Activated CD4-positive, alpha-beta T cell treated with anti-CD3 and anti-CD28 coated beads for 36 hours (primary cell): ENCODE measurements at regions of chr19 and their contacts with region 1.

Region 1: DNA sequence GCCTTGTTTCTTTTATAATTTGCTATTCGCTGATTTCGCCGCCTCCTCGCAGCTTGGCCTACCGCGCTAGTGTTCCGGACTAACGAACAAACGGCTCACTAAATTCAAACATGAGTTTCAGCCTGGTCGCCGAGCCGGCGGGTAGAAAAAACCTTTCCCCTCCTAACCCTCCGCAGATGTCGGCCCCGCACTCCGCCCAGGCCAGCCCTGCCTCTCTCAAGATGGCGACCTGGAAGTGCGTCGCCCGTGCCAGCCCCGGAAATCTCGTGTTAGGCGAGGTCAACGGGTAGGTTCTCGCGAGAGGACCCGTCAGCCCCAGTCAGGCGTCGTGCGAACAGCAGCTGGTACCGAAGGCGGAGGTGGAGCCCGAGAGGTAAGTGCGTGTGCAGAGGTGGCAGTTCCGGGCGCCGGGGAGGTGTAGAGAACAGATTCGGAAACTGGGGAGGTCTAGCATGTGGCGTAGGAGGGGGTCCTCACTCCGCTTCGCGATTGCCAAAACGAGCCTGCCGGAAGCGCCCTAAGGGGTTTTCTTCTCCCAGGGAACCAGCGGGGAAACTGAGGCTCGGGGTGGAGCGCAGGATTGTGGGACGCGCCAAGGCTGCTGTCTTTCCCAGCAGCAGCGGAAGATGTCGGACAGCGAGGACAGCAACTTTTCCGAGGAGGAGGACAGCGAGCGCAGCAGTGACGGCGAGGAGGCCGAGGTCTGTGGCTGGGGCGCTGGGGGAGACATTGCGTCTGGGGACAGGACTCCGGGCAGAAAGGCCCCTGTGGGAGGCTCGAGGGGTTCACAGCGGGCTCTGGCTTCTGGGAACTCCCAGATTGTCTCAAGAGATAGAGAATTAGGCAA is at the start of gene SUPT5H:
- DNase-seq: peak; percentile 99
- ATAC-seq: peak; percentile 89
- H3K4me3 Mint-ChIP-seq: peak within 1 kb of the TSS; percentile 100
- H3K27ac Mint-ChIP-seq: peak within 1 kb of the TSS; percentile 100
- H3K4me1 Mint-ChIP-seq: peaks cover 43% of the 10 kb centered on the region
- H3K27me3 Mint-ChIP-seq: no peaks in the 10 kb centered on the region
- total RNA-seq, gene SUPT5H: 157 to 165 TPM

Region 2: GRCh38 chr19:39390755-39391592 is 54.5 kb before region 1 on chr19 and contains the starts of genes MED29 and PAF1:
- CTCF ChIA-PET with region 1: interaction called, 3 read pairs
- POLR2A ChIA-PET with region 1: interaction called, 5 read pairs
- intact Hi-C with region 1: loop called in 1 of 2 experiments (anchors 1 kb)
- DNase-seq: peak; percentile 98
- ATAC-seq: peak; percentile 97
- H3K4me3 Mint-ChIP-seq: peak within 1 kb of the TSS; percentile 99
- H3K27ac Mint-ChIP-seq: peak within 1 kb of the TSS; percentile 98
- H3K4me1 Mint-ChIP-seq: peaks cover 28% of the 10 kb centered on the region
- H3K27me3 Mint-ChIP-seq: no peaks in the 10 kb centered on the region
- total RNA-seq, gene MED29: 24.0 to 34.6 TPM
- total RNA-seq, gene PAF1: 40.4 to 54.2 TPM

Region 3: DNA sequence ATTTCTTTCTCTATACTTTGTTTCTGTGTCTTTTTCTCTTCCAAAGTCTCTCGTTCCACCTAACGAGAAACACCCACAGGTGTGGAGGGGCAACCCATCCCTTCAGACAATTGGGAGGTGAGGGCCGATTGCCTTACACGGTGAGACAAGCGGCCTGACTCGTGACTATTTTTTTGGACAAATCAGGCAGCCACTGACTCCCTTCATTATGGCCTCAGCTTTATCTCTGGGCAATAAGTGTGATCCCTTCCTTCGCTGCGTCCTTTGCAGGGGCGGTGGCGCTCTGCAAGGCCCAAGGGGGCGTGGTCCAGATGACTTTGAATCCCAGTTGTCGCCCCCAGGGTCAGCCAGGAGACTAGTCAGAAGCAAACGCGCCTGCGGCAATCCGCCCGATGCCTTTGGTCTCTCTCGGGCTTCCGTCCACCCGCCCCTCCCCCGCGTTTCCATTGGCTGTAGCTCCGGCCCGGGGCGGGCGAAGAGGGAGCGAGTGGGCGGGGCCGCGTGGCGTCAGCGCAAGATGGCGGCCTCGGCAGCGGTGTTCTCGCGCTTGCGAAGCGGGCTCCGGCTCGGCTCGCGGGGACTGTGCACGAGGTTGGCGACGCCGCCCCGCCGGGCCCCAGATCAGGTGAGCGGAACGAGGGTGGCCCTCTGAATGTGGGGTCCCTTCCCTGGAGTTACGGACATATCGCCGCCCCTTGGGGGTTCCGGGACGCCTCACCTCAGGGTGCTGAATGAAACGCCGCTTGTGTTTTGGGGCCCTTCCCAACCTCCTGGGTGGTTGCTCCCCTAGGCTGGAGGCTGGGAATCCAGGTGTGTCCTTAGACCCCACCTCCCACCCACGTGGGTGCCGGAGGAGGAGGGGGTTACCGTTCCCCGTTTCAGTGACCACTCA is 35.1 kb after region 1 on chr19 and contains the start of gene TIMM50:
- CTCF ChIA-PET with region 1: no interaction called
- POLR2A ChIA-PET with region 1: interaction called, 3 read pairs
- intact Hi-C with region 1: loop called (anchors 1 to 2 kb)
- DNase-seq: peak; percentile 100
- ATAC-seq: peak; percentile 94
- H3K4me3 Mint-ChIP-seq: peak within 1 kb of the TSS; percentile 95
- H3K27ac Mint-ChIP-seq: peak within 1 kb of the TSS; percentile 92
- H3K4me1 Mint-ChIP-seq: peaks cover 24% of the 10 kb centered on the region
- H3K27me3 Mint-ChIP-seq: no peaks in the 10 kb centered on the region
- total RNA-seq, gene TIMM50: 99.4 to 126 TPM

Region 4: GRCh38 chr19:39539519-39540332 is 94.2 kb after region 1 on chr19 and contains the start of gene EID2:
- CTCF ChIA-PET with region 1: interaction called, 47 read pairs
- POLR2A ChIA-PET with region 1: no interaction called
- intact Hi-C with region 1: loop called in 1 of 2 experiments (anchors 1 kb)
- DNase-seq: peak; percentile 98
- ATAC-seq: peak; percentile 80
- H3K4me3 Mint-ChIP-seq: peak within 1 kb of the TSS; percentile 84
- H3K27ac Mint-ChIP-seq: peak within 1 kb of the TSS; percentile 94
- H3K4me1 Mint-ChIP-seq: peaks cover 53% of the 10 kb centered on the region
- H3K27me3 Mint-ChIP-seq: no peaks in the 10 kb centered on the region
- total RNA-seq, gene EID2: 9.0 to 10.7 TPM

Region 5: DNA sequence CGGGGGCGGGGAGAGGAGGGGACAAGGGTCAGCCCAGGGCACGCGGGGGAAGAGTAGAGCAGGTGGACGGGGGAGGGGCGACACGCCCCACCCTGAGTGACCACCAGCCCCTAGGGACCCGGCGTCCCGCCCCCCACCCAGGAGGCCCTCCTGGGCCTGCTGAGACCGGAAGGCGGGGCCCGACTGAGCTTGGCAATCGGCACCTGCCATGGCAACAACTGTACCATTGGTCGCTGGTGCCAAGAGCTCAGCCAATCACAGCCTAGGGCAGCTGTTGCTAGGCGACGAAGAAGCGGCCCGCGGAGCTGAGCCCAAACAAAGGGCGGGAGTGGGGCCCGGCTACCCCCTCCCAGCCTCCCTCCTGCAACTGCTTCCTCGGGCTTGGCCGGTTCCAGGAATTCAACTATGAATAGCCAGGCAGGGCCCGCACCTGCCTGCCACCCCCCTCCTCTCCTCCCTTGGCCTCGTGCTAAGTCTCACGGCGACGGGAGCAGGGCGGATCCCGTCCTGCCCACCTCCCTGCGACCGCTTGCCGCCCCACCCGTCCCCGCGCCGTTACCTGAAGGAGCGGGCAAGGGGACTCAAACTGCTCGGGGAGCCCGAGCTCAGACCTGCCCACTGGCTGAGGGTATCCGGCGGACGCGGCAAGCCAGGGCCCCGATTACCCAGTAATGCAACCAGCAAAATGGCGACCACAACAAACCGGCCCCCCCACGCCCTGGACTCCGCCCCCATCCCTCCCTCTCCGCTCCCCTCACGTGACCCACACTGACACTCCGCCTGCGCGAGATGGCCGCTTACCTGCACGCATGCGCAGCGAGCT is 388.2 kb after region 1 on chr19 and contains the start of gene DYRK1B:
- CTCF ChIA-PET with region 1: no interaction called
- POLR2A ChIA-PET with region 1: no interaction called
- intact Hi-C with region 1: loop called in 1 of 2 experiments (anchors 5 kb)
- DNase-seq: peak; percentile 99
- ATAC-seq: peak; percentile 92
- H3K4me3 Mint-ChIP-seq: peak within 1 kb of the TSS; percentile 64
- H3K27ac Mint-ChIP-seq: peak within 1 kb of the TSS; percentile 84
- H3K4me1 Mint-ChIP-seq: peaks cover 25% of the 10 kb centered on the region
- H3K27me3 Mint-ChIP-seq: no peaks in the 10 kb centered on the region
- total RNA-seq, gene DYRK1B: 4.8 to 6.9 TPM